B cell (primary cell): ENCODE measurements at regions of chr19 and their contacts with region 1.

Region 1: DNA sequence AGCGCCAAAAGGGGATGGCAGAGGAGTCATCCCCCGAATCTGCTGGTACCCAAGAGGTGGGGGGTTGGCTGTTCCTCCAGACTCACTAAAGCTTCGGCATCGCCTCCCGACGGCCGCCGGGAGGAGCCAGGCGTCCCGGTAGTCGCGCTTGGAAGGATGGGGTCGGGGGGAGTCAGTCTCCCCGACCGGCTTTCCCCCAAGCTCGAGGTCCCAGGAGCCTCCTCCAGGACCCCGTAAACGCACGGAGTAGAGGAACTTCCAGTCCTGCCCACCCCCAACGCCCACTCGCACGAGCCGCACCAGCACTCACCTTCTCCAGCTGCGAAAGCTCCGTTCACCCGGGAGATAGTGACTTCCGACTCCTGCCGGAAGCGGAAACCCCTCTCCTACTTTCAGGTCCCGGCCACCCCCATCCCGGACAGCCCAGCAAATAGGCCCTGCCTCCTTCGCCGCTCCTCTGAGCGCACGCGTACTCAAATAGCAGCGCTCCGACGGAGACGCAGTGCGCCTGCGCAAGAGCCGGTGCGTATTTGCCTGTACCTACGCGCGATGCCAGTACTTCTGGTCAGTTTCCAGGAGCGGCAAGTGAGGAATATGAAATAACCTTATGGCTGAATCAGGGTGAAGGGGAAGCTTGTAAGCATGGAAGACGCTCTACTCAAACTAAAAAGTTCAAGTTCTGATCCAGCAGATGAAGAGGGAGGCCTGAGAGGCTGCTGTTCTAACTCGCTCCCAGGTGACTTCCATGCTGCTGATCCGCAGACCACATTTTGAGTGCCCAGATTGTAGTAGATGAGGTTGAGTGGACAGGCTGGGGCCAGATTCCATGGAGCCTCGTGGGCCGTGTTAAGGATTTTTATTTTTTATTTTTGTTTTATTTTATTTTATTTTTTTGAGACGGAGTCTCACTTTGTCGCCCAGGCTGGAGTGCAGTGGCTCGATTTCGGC is at the start of gene ELOF1:
- DNase-seq: peak; percentile 98
- ATAC-seq: peak; percentile 86
- H3K4me3 ChIP-seq: peak within 1 kb of the TSS; percentile 70 to 95 (median 75)
- H3K4me3 Mint-ChIP-seq: peak within 1 kb of the TSS; percentile 93
- H3K27ac ChIP-seq: peak within 1 kb of the TSS; percentile 80 to 81
- H3K27ac Mint-ChIP-seq: peak within 1 kb of the TSS; percentile 96
- H3K4me1 ChIP-seq: peaks cover 33 to 64% of the 10 kb centered on the region in 2 donors
- H3K4me1 Mint-ChIP-seq: peaks cover 61% of the 10 kb centered on the region
- H3K27me3 ChIP-seq: no peaks in the 10 kb centered on the region
- H3K27me3 Mint-ChIP-seq: no peaks in the 10 kb centered on the region
- CTCF ChIP-seq: no peak
- total RNA-seq, gene ELOF1: 69.5 and 70.9 TPM in 2 replicates

Region 2: GRCh38 chr19:11475861-11476260 is 83.3 kb before region 1 on chr19:
- CTCF ChIA-PET with region 1: no interaction called
- POLR2A ChIA-PET with region 1: no interaction called
- intact Hi-C with region 1: no loop called
- DNase-seq: no peak
- ATAC-seq: no peak
- H3K4me3 ChIP-seq: no peak overlapping the region
- H3K4me3 Mint-ChIP-seq: no peak overlapping the region
- H3K27ac ChIP-seq: no peak overlapping the region
- H3K27ac Mint-ChIP-seq: no peak overlapping the region
- H3K4me1 ChIP-seq: peaks cover 13 to 20% of the 10 kb centered on the region in 2 donors
- H3K4me1 Mint-ChIP-seq: peaks cover 9% of the 10 kb centered on the region
- H3K27me3 ChIP-seq: peaks cover 0 to 32% (median 10%) of the 10 kb centered on the region in 4 experiments
- H3K27me3 Mint-ChIP-seq: peaks cover 23% of the 10 kb centered on the region
- CTCF ChIP-seq: no peak

Region 3: GRCh38 chr19:11496391-11497163 is 62.6 kb before region 1 on chr19:
- CTCF ChIA-PET with region 1: no interaction called
- POLR2A ChIA-PET with region 1: no interaction called
- intact Hi-C with region 1: loop called (anchors 2 kb)
- DNase-seq: peak; percentile 67
- ATAC-seq: peak; percentile 72
- H3K4me3 ChIP-seq: no peak overlapping the region
- H3K4me3 Mint-ChIP-seq: no peak overlapping the region
- H3K27ac ChIP-seq: no peak overlapping the region
- H3K27ac Mint-ChIP-seq: no peak overlapping the region
- H3K4me1 ChIP-seq: no peaks in the 10 kb centered on the region
- H3K4me1 Mint-ChIP-seq: no peaks in the 10 kb centered on the region
- H3K27me3 ChIP-seq: no peaks in the 10 kb centered on the region
- H3K27me3 Mint-ChIP-seq: no peaks in the 10 kb centered on the region
- CTCF ChIP-seq: peak; percentile 70

Region 4: GRCh38 chr19:11528551-11529341 is 30.4 kb before region 1 on chr19 and contains the start of gene ECSIT:
- CTCF ChIA-PET with region 1: interaction called, 5 read pairs
- POLR2A ChIA-PET with region 1: no interaction called
- intact Hi-C with region 1: loop called (anchors 2 kb)
- DNase-seq: peak; percentile 95
- ATAC-seq: peak; percentile 99
- H3K4me3 ChIP-seq: peak within 1 kb of the TSS; percentile 45 to 83 (median 79)
- H3K4me3 Mint-ChIP-seq: peak within 1 kb of the TSS; percentile 98
- H3K27ac ChIP-seq: peak within 1 kb of the TSS; percentile 58 to 79
- H3K27ac Mint-ChIP-seq: peak within 1 kb of the TSS; percentile 95
- H3K4me1 ChIP-seq: peaks cover 7 to 19% of the 10 kb centered on the region in 2 donors
- H3K4me1 Mint-ChIP-seq: peaks cover 16% of the 10 kb centered on the region
- H3K27me3 ChIP-seq: no peaks in the 10 kb centered on the region
- H3K27me3 Mint-ChIP-seq: no peaks in the 10 kb centered on the region
- CTCF ChIP-seq: no peak
- total RNA-seq, gene ECSIT: 45.6 and 56.7 TPM in 2 replicates

Region 5: DNA sequence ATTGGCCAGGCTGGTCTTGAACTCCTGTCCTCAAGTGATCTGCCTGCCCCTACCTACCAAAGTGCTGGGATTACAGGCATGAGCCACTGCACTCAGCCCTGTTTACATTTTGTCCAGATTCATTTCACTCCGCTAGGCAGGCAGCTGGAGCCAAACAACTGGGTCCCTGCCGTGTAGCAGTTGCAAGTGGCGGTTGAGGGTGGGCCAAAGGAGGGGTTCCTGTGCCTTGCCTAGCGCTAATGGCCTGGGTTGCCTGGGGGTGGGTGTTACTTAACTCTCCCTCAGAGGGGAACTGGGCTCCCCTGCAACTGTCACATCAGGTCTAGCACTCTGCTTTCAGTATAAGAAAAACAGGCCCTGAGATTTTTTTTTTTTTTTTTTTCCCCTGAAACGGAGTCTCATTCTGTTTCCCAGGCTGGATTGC is 10.9 kb after region 1 on chr19:
- CTCF ChIA-PET with region 1: interaction called, 15 read pairs
- POLR2A ChIA-PET with region 1: interaction called, 5 read pairs
- intact Hi-C with region 1: loop called (anchors 1 kb)
- DNase-seq: peak; percentile 45
- ATAC-seq: no peak
- H3K4me3 ChIP-seq: no peak overlapping the region
- H3K4me3 Mint-ChIP-seq: no peak overlapping the region
- H3K27ac ChIP-seq: peak overlapping the region in 1 of 2 donors; percentile 5
- H3K27ac Mint-ChIP-seq: peak overlapping the region; percentile 85
- H3K4me1 ChIP-seq: peaks cover 47 to 75% of the 10 kb centered on the region in 2 donors
- H3K4me1 Mint-ChIP-seq: peaks cover 49% of the 10 kb centered on the region
- H3K27me3 ChIP-seq: no peaks in the 10 kb centered on the region
- H3K27me3 Mint-ChIP-seq: no peaks in the 10 kb centered on the region
- CTCF ChIP-seq: no peak

Region 6: DNA sequence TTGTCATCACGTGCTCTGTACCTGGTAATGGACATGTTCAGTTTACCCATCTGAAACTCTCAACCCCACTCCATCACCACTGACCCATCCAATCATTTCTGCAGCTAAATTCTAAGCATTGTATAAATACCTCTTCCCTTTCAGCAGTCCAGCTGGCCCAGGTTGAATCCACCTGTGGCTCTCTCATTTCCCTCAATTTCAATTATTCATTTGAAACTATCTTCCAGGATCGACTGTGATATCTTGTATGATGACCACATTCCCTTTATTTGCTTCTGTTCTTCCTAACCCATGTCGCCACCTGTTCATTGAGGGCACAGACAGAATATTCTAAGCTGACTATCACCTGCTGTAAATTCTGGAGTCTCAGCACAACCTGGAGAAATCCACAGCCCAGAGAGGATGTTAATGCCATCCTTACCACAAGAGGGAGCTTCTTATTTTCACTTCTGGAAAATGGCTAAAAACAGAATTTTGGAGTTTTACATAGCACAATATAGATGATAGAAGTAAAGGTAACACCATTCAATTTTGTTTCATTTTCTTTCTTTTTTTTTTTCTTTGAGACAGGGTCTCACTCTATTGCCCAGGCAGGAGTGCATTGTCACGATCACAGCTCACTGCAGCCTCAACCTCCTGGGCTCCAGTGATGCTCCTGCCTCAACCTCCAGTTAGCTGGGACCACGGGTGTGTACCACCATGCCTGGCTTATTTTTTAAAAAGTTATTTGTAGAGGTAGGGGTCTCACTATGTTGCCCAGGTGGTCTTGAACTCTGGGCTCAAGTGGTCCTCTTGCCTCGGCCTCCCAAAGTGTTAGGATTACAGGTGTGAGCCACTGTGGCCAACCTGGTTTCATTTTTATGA is 141.0 kb after region 1 on chr19:
- CTCF ChIA-PET with region 1: interaction called, 8 read pairs
- POLR2A ChIA-PET with region 1: no interaction called
- intact Hi-C with region 1: loop called (anchors 1 kb)
- DNase-seq: peak; percentile 54
- ATAC-seq: no peak
- H3K4me3 ChIP-seq: no peak overlapping the region
- H3K4me3 Mint-ChIP-seq: no peak overlapping the region
- H3K27ac ChIP-seq: no peak overlapping the region
- H3K27ac Mint-ChIP-seq: no peak overlapping the region
- H3K4me1 ChIP-seq: peaks cover 1% of the 10 kb centered on the region in 2 donors
- H3K4me1 Mint-ChIP-seq: peaks cover under 1% of the 10 kb centered on the region
- H3K27me3 ChIP-seq: peaks cover 0 to 7% (median 3%) of the 10 kb centered on the region in 4 experiments
- H3K27me3 Mint-ChIP-seq: peaks cover 11% of the 10 kb centered on the region
- CTCF ChIP-seq: peak; percentile 83

Region 7: GRCh38 chr19:11814029-11814699 is 255.0 kb after region 1 on chr19 and contains the start of gene ZNF440:
- CTCF ChIA-PET with region 1: interaction called, 3 read pairs
- POLR2A ChIA-PET with region 1: no interaction called
- intact Hi-C with region 1: loop called (anchors 5 kb)
- DNase-seq: peak; percentile 85
- ATAC-seq: peak; percentile 99
- H3K4me3 ChIP-seq: peak within 1 kb of the TSS; percentile 75 to 94 (median 82)
- H3K4me3 Mint-ChIP-seq: peak within 1 kb of the TSS; percentile 91
- H3K27ac ChIP-seq: peak within 1 kb of the TSS; percentile 39 to 66
- H3K27ac Mint-ChIP-seq: peak within 1 kb of the TSS; percentile 85
- H3K4me1 ChIP-seq: peaks cover 4 to 14% of the 10 kb centered on the region in 2 donors
- H3K4me1 Mint-ChIP-seq: peaks cover 29% of the 10 kb centered on the region
- H3K27me3 ChIP-seq: no peaks in the 10 kb centered on the region
- H3K27me3 Mint-ChIP-seq: no peaks in the 10 kb centered on the region
- CTCF ChIP-seq: no peak
- total RNA-seq, gene ZNF440: 22.4 and 23.4 TPM in 2 replicates

Region 8: DNA sequence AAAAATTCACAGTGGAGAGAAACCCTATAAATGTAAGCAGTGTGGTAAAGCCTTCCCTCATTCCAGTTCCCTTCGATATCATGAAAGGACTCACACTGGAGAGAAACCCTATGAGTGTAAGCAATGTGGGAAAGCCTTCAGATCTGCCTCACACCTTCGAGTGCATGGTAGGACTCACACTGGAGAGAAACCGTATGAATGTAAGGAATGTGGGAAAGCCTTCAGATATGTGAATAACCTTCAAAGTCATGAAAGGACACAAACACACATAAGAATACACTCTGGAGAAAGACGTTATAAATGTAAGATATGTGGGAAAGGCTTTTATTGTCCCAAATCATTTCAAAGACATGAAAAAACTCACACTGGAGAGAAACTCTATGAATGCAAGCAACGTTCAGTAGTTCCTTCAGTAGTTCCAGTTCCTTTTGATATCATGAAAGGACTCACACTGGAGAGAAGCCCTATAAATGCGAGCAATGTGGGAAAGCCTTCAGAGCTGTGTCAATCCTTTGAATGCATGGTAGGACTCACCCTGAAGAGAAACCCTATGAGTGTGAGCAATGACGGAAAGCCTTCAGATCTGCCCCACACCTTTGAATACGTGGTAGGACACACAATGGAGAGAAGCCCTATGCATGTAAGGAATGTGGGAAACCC is 273.2 kb after region 1 on chr19:
- CTCF ChIA-PET with region 1: no interaction called
- POLR2A ChIA-PET with region 1: no interaction called
- intact Hi-C with region 1: no loop called
- DNase-seq: no peak
- ATAC-seq: no peak
- H3K4me3 ChIP-seq: no peak overlapping the region
- H3K4me3 Mint-ChIP-seq: no peak overlapping the region
- H3K27ac ChIP-seq: no peak overlapping the region
- H3K27ac Mint-ChIP-seq: no peak overlapping the region
- H3K4me1 ChIP-seq: no peaks in the 10 kb centered on the region
- H3K4me1 Mint-ChIP-seq: peaks cover 5% of the 10 kb centered on the region
- H3K27me3 ChIP-seq: no peaks in the 10 kb centered on the region
- H3K27me3 Mint-ChIP-seq: no peaks in the 10 kb centered on the region
- CTCF ChIP-seq: no peak